Mammary epithelial cell (primary cell): ENCODE measurements at regions of chr18 and their contacts with region 1.

Region 1: DNA sequence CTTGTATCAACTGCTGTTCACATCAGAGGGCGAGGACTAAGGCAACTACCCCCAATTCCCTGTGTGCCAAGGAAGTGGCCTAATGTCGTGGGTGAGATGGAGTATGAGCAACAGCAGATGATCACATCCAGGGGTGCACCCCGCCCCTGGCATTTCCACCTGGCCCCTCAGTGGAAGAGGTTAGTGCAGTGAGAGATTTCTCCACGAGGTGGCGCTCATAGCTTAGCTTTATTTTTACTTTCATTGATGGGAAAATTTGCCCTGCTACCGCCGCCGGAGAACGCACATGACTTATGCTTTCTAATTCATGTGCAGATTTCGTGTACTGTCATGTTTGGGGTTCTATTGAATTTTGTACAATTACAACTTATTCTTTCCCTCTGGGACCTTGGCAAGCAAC is 470.6 kb upstream of the MEX3C start:
- DNase-seq: peak; percentile 39
- H3K4me3 ChIP-seq: no peak overlapping the region
- H3K27ac ChIP-seq: no peak overlapping the region
- H3K4me1 ChIP-seq: no peaks in the 10 kb centered on the region
- H3K27me3 ChIP-seq: no peaks in the 10 kb centered on the region
- CTCF ChIP-seq: peak; percentile 70 to 79

Region 2: GRCh38 chr18:51278045-51278649 is 390.0 kb before region 1 on chr18:
- CTCF ChIA-PET with region 1: no interaction called
- dilution Hi-C with region 1: no loop called
- in situ Hi-C with region 1: no loop called
- intact Hi-C with region 1: loop called (anchors 5 kb)
- DNase-seq: peak; percentile 57
- H3K4me3 ChIP-seq: no peak overlapping the region
- H3K27ac ChIP-seq: no peak overlapping the region
- H3K4me1 ChIP-seq: no peaks in the 10 kb centered on the region
- H3K27me3 ChIP-seq: no peaks in the 10 kb centered on the region
- CTCF ChIP-seq: peak; percentile 96 to 98

Region 3: DNA sequence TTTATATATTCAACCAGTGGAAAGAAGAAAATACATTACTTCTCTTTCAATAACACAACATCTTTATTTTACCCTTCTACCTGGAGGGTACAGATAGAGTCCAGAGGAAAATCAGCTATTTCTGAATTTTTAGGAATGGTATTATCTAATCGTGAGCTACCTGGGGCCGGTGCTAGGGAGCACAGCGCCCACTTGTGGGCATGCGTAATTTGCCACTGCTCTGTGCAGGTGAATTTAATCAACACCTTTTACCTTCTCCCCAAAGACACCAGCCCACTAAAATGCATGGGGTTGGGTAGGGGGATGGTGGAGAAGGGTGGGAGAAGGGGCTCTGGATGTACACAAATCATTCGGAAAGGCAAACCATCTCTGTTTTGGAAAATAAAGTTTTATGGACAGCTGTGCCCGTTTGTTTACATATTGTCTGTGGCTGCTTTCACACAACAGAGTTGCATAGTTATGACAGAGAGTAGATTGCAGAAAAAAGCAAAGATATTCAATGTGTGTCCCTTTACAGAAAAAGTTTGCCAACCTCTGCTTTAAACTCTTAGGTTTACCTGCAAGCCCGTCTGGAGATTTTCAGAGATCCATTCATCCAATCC is 620.4 kb after region 1 on chr18:
- CTCF ChIA-PET with region 1: no interaction called
- dilution Hi-C with region 1: no loop called
- in situ Hi-C with region 1: loop called (anchors 10 to 25 kb)
- intact Hi-C with region 1: loop called (anchors 1 kb)
- DNase-seq: peak; percentile 25
- H3K4me3 ChIP-seq: no peak overlapping the region
- H3K27ac ChIP-seq: no peak overlapping the region
- H3K4me1 ChIP-seq: peaks cover 4% of the 10 kb centered on the region
- H3K27me3 ChIP-seq: no peaks in the 10 kb centered on the region
- CTCF ChIP-seq: peak; percentile 96 to 97

Region 4: DNA sequence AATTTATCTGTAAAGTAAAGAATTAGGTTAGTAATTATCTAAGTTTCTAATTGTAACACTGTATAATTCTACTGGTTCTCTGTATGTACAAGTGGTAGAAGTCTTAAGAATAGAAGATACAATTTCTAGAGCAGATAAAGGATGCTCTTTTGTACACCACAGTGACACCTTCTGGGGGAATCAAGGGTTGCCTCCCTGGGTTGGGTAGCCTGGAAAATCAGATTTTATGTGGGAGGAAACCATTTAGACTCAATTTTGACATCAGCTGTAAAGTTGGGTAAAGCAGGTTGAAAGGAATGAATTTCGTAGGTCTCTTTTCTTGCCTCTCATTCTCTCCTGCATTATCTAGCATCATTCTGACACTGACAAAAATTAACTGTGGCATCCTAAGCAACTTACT is 1026.7 kb after region 1 on chr18:
- CTCF ChIA-PET with region 1: no interaction called
- dilution Hi-C with region 1: no loop called
- in situ Hi-C with region 1: loop called in 1 of 2 experiments (anchors 25 kb)
- intact Hi-C with region 1: loop called (anchors 2 kb)
- DNase-seq: no peak
- H3K4me3 ChIP-seq: no peak overlapping the region
- H3K27ac ChIP-seq: no peak overlapping the region
- H3K4me1 ChIP-seq: no peaks in the 10 kb centered on the region
- H3K27me3 ChIP-seq: no peaks in the 10 kb centered on the region
- CTCF ChIP-seq: peak; percentile 48 to 54

Region 5: GRCh38 chr18:52903857-52904256 is 1235.8 kb after region 1 on chr18:
- CTCF ChIA-PET with region 1: no interaction called
- dilution Hi-C with region 1: no loop called
- in situ Hi-C with region 1: loop called in 1 of 2 experiments (anchors 25 kb)
- intact Hi-C with region 1: loop called (anchors 1 kb)
- DNase-seq: peak; percentile 2
- H3K4me3 ChIP-seq: no peak overlapping the region
- H3K27ac ChIP-seq: no peak overlapping the region
- H3K4me1 ChIP-seq: no peaks in the 10 kb centered on the region
- H3K27me3 ChIP-seq: no peaks in the 10 kb centered on the region
- CTCF ChIP-seq: peak; percentile 44 to 53

Region 6: DNA sequence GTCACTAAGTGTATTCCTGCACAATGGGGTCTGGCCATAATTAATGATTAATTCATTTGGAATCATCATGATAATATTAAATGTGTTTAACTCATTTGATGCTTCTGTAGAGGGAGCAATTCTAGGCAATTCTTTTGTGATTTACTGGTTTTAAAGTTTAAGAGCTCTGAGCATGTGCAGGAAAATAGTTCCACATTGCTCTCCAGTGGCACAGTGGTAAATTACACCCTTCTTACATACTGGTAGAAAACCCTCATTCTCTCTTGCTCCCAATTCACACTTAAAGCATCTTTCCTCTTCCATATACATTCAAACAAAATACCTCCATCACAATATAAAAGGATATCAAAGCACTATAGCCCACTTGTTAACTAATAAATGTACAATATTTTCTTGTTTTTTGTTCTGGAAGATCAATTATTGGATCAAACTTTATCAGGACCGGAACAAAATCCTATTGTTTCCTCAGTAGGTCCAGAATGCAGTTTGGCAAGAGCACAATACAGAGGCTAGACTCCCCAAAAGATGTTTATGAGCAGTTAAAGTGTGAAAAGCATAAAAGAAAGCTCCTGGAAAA is 1712.0 kb after region 1 on chr18:
- CTCF ChIA-PET with region 1: no interaction called
- dilution Hi-C with region 1: no loop called
- in situ Hi-C with region 1: loop called in 1 of 2 experiments (anchors 25 kb)
- intact Hi-C with region 1: no loop called
- DNase-seq: peak; percentile 14
- H3K4me3 ChIP-seq: no peak overlapping the region
- H3K27ac ChIP-seq: no peak overlapping the region
- H3K4me1 ChIP-seq: no peaks in the 10 kb centered on the region
- H3K27me3 ChIP-seq: no peaks in the 10 kb centered on the region
- CTCF ChIP-seq: peak; percentile 51 to 52